ENCODE measurements at regions of chr4 and their contacts with region 1.

Region 1: DNA sequence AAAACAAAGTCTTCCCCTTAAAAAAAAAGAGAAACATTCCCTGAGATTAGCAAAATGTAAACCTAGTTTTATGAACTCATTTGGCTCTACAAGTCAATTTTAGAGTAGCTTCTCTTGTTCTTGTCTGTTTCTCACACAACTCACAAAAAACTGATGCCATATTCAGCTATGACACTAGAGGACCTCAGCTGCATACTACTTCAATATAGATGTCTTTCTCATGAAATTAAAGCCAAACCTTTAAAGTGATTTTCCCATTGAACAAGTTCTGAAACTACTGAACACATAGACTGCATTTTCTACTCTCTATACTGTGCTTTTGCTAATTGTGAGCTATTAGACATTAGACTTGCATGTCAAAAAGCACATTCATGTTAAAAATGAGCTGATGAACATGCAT is 49.8 kb downstream of the TBCK start:
- DNase-seq: no peak
- ATAC-seq: no peak
- H3K4me3 Mint-ChIP-seq: no peak overlapping the region
- H3K27ac Mint-ChIP-seq: no peak overlapping the region
- H3K4me1 Mint-ChIP-seq: no peaks in the 10 kb centered on the region
- H3K27me3 Mint-ChIP-seq: no peaks in the 10 kb centered on the region
- CTCF ChIP-seq: no peak

Region 2: GRCh38 chr4:105158837-105159236 is 1107.4 kb before region 1 on chr4:
- CTCF ChIA-PET with region 1: no interaction called
- POLR2A ChIA-PET with region 1: no interaction called
- intact Hi-C with region 1: no loop called
- DNase-seq: no peak
- ATAC-seq: no peak
- H3K4me3 Mint-ChIP-seq: no peak overlapping the region
- H3K27ac Mint-ChIP-seq: no peak overlapping the region
- H3K4me1 Mint-ChIP-seq: peaks cover 44% of the 10 kb centered on the region
- H3K27me3 Mint-ChIP-seq: no peaks in the 10 kb centered on the region
- CTCF ChIP-seq: no peak

Region 3: GRCh38 chr4:105797225-105797624 is 469.0 kb before region 1 on chr4:
- CTCF ChIA-PET with region 1: no interaction called
- POLR2A ChIA-PET with region 1: no interaction called
- intact Hi-C with region 1: no loop called
- DNase-seq: no peak
- ATAC-seq: no peak
- H3K4me3 Mint-ChIP-seq: no peak overlapping the region
- H3K27ac Mint-ChIP-seq: no peak overlapping the region
- H3K4me1 Mint-ChIP-seq: no peaks in the 10 kb centered on the region
- H3K27me3 Mint-ChIP-seq: no peaks in the 10 kb centered on the region
- CTCF ChIP-seq: no peak

Region 4: DNA sequence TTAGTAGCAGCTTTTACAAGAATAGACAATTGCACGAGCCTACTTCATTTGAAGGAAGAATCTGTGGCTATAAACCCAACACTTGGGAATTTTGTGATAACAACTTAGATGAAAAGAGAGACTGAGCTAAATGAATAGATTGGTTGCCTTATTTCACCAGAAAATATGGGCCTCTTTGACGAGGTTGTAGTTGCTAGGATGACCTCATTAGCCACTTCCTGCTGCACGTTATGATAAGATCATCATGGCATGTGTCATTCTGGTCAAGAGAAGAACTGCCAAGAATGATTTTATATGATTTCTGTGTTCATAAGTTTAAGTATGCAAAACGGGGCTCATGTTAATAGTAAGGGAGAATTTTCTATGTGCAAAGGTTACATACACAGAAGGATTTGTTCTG is 424.3 kb after region 1 on chr4:
- CTCF ChIA-PET with region 1: no interaction called
- POLR2A ChIA-PET with region 1: no interaction called
- intact Hi-C with region 1: no loop called
- DNase-seq: no peak
- ATAC-seq: no peak
- H3K4me3 Mint-ChIP-seq: no peak overlapping the region
- H3K27ac Mint-ChIP-seq: no peak overlapping the region
- H3K4me1 Mint-ChIP-seq: no peaks in the 10 kb centered on the region
- H3K27me3 Mint-ChIP-seq: no peaks in the 10 kb centered on the region
- CTCF ChIP-seq: no peak

Region 5: GRCh38 chr4:107183155-107183774 is 917.1 kb after region 1 on chr4:
- CTCF ChIA-PET with region 1: no interaction called
- POLR2A ChIA-PET with region 1: no interaction called
- intact Hi-C with region 1: loop called (anchors 10 kb)
- DNase-seq: no peak
- ATAC-seq: peak; percentile 65
- H3K4me3 Mint-ChIP-seq: no peak overlapping the region
- H3K27ac Mint-ChIP-seq: no peak overlapping the region
- H3K4me1 Mint-ChIP-seq: no peaks in the 10 kb centered on the region
- H3K27me3 Mint-ChIP-seq: peaks cover 3% of the 10 kb centered on the region
- CTCF ChIP-seq: no peak